ENCODE measurements at regions of chr1 and their contacts with region 1.

Region 1: DNA sequence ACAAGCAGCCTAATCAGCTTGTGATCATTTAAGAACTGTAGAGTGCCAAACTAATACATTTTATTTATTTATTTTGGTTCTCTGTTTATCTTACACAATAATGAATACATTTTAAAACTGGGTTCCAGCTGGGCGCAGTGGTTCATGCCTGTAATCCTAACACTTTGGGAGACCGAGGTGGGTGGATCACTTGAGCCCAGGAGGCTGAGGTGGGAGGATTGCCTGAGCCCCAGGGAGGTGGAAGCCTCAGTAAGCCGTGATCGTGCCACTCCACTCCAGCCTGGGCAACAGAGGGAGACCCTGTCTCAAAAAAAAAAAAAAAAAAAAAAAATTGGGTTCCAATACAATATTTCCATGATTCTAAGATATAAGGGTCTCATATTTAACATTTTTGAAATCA is 9.2 kb downstream of the FBXO28 start:
- H3K4me3 ChIP-seq: no peak overlapping the region
- H3K27ac ChIP-seq: no peak overlapping the region
- H3K4me1 ChIP-seq: no peaks in the 10 kb centered on the region
- CTCF ChIP-seq: no peak

Region 2: GRCh38 chr1:224042557-224043118 is 80.5 kb before region 1 on chr1:
- CTCF ChIA-PET with region 1: no interaction called
- POLR2A ChIA-PET with region 1: no interaction called
- H3K4me3 ChIP-seq: no peak overlapping the region
- H3K27ac ChIP-seq: no peak overlapping the region
- H3K4me1 ChIP-seq: no peaks in the 10 kb centered on the region
- CTCF ChIP-seq: no peak

Region 3: DNA sequence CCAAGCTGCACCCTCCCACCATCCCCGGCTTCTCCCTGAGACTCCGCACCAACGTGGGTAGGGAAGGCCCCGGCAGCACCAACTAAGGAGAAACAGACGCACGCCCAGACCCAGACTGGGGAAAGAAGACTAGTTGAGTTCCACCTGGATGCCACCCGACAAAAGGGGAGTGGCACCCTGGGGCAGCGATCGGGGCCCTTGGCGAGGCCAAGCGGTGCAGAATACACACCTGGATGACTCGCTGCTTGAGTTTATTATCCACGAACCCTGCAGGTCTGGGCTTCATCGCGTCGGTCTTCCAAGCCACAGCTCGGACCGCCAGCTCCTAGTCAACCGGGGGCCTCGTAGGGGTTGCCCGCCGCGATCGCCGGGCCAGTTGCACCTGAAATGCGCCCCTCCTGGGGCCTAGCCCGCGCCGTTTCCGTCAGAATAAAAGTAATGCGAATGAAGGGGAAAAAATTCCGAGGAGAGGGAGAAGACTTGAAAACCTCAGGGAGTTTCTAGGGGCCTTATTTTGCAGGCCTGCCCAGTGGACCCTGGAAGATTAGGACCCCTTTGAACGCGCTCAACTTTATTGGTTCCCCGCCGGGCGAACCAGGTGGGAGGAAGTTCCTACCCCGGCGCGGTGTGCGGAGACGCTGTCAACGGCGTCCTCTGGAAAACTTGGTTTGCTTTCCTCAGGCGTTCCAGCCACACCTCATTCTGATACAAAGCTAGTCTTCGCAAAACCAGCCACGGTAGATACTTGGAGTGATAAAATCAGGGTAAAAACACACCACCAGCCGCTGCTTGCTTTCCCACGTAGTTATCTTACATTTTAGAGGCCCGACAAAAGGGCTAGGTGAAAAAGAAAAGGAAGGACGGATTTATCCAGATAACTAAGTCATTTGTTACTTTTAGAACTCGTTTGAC is 207.0 kb after region 1 on chr1 and contains the start of gene NVL:
- CTCF ChIA-PET with region 1: interaction called, 76 read pairs
- POLR2A ChIA-PET with region 1: interaction called, 3 read pairs
- H3K4me3 ChIP-seq: peak within 1 kb of the TSS; percentile 79
- H3K27ac ChIP-seq: peak within 1 kb of the TSS; percentile 97
- H3K4me1 ChIP-seq: peaks cover 3% of the 10 kb centered on the region; the same call in 1 of the 2 replicates
- CTCF ChIP-seq: no peak

Measured in HEK293 (cell line).